Activated CD8-positive, alpha-beta T cell treated with anti-CD3 and anti-CD28 coated beads, Interleukin-2, amount 10 ng/mL, durations not matched to agents 7 days and 5 days (primary cell): ENCODE measurements at regions of chr5 and their contacts with region 1.

Region 1: DNA sequence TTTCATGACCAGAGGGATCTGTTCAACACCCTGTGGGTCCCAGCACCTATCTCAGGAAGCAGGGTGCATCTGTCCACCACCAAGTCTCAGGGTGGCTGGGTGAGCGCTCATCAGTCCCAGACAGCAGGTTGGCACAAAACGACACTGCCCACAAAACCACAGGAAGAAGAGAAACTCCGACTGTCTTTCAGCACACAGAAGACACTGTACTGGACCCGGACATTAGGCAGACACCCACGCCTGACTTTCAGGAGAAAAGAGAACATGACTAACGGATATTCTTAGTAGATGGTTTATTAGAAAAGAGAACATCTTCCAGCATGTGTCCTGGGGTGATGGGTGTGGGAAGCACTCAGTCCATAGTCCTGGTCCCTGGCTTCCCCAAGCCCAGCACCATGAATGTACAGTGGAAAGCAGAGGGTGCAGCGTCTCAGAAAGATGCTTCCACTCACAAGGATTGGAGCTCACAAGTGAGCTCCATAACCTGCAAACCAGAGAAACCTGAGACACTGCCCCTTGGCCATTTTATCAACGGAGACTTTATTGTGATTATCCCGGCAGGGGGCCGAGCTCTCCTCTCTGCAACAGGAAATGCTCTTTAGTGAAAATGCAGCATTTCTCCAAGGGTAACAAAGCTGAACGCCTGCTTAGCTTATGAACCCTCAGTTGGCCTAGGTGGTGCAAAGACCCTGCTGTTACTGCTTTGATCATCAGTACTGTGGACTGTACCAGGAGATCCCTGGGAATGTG is 35.8 kb upstream of the LCP2 start:
- DNase-seq: peak; percentile 79
- ATAC-seq: peak; percentile 43
- H3K4me3 Mint-ChIP-seq: no peak overlapping the region
- H3K27ac Mint-ChIP-seq: no peak overlapping the region
- H3K4me1 Mint-ChIP-seq: peaks cover 30% of the 10 kb centered on the region
- H3K27me3 Mint-ChIP-seq: no peaks in the 10 kb centered on the region

Region 2: GRCh38 chr5:170267431-170268152 is 65.7 kb before region 1 on chr5:
- CTCF ChIA-PET with region 1: interaction called, 208 read pairs
- POLR2A ChIA-PET with region 1: interaction called, 18 read pairs
- DNase-seq: peak; percentile 89
- ATAC-seq: peak; percentile 59
- H3K4me3 Mint-ChIP-seq: peak overlapping the region; percentile 62
- H3K27ac Mint-ChIP-seq: peak overlapping the region; percentile 90
- H3K4me1 Mint-ChIP-seq: peaks cover 97% of the 10 kb centered on the region
- H3K27me3 Mint-ChIP-seq: no peaks in the 10 kb centered on the region

Region 3: GRCh38 chr5:170287532-170287931 is 45.8 kb before region 1 on chr5:
- CTCF ChIA-PET with region 1: interaction called, 226 read pairs
- POLR2A ChIA-PET with region 1: interaction called, 432 read pairs
- DNase-seq: no peak
- ATAC-seq: peak; percentile 12
- H3K4me3 Mint-ChIP-seq: peak overlapping the region; percentile 55
- H3K27ac Mint-ChIP-seq: peak overlapping the region; percentile 85
- H3K4me1 Mint-ChIP-seq: peaks cover 100% of the 10 kb centered on the region
- H3K27me3 Mint-ChIP-seq: no peaks in the 10 kb centered on the region

Region 4: GRCh38 chr5:170302653-170303501 is 30.5 kb before region 1 on chr5:
- CTCF ChIA-PET with region 1: interaction called, 226 read pairs
- POLR2A ChIA-PET with region 1: interaction called, 432 read pairs
- DNase-seq: peak; percentile 77
- ATAC-seq: peak; percentile 95
- H3K4me3 Mint-ChIP-seq: peak overlapping the region; percentile 80
- H3K27ac Mint-ChIP-seq: peak overlapping the region; percentile 96
- H3K4me1 Mint-ChIP-seq: peaks cover 76% of the 10 kb centered on the region
- H3K27me3 Mint-ChIP-seq: no peaks in the 10 kb centered on the region

Region 5: DNA sequence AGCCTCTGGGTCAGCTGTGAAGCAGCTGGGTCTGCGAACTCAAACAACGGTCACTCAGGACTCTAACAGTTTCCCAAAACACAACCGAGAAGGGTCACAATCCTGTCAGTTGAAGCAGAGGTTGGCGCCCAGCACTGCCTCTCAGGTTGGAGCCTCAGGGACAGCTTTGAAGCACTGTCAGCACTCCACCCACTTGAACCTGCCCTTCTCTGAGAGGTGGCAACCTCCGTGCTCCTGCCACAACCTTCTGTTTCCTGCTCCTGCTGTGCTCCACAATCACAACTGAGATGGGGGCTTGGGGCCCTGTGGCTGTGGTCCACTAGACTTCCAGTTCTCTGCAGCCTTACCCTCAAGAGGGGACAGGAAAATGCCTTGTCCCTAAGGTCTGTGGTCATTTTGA is 14.0 kb before region 1 on chr5:
- CTCF ChIA-PET with region 1: interaction called, 22 read pairs
- POLR2A ChIA-PET with region 1: interaction called, 31 read pairs
- DNase-seq: no peak
- ATAC-seq: no peak
- H3K4me3 Mint-ChIP-seq: no peak overlapping the region
- H3K27ac Mint-ChIP-seq: peak overlapping the region; percentile 65
- H3K4me1 Mint-ChIP-seq: peaks cover 13% of the 10 kb centered on the region
- H3K27me3 Mint-ChIP-seq: no peaks in the 10 kb centered on the region